H1 (cell line): ENCODE measurements at regions of chr1 and their contacts with region 1.

Region 1: GRCh38 chr1:50271968-50272578 is 151.2 kb downstream of the DMRTA2 start:
- DNase-seq: peak in 1 of 2 experiments; percentile 70
- H3K4me3 ChIP-seq: no peak overlapping the region
- H3K27ac ChIP-seq: no peak overlapping the region
- H3K4me1 ChIP-seq: peaks cover 2 to 12% (median 8%) of the 10 kb centered on the region in 4 experiments
- H3K27me3 ChIP-seq: no peaks in the 10 kb centered on the region
- CTCF ChIP-seq: peak; percentile 75 to 92 (median 84)
- EP300 ChIP-seq: no peak
- POLR2A ChIP-seq: no peak
- RAD21 ChIP-seq: peak; percentile 76 to 79

Region 2: GRCh38 chr1:50123071-50123470 is 149.0 kb before region 1 on chr1:
- CTCF ChIA-PET with region 1: no interaction called
- POLR2A ChIA-PET with region 1: no interaction called
- DNase-seq: no peak
- H3K4me3 ChIP-seq: no peak overlapping the region
- H3K27ac ChIP-seq: no peak overlapping the region
- H3K4me1 ChIP-seq: no peaks in the 10 kb centered on the region
- H3K27me3 ChIP-seq: no peaks in the 10 kb centered on the region
- CTCF ChIP-seq: no peak
- EP300 ChIP-seq: no peak
- POLR2A ChIP-seq: no peak
- RAD21 ChIP-seq: no peak

Region 3: GRCh38 chr1:50246869-50247268 is 25.2 kb before region 1 on chr1:
- CTCF ChIA-PET with region 1: interaction called, 11 read pairs
- POLR2A ChIA-PET with region 1: no interaction called
- DNase-seq: no peak
- H3K4me3 ChIP-seq: no peak overlapping the region
- H3K27ac ChIP-seq: no peak overlapping the region
- H3K4me1 ChIP-seq: peaks cover 0 to under 1% (median under 1%) of the 10 kb centered on the region in 4 experiments; a peak in 2 of 7 replicates
- H3K27me3 ChIP-seq: no peaks in the 10 kb centered on the region
- CTCF ChIP-seq: no peak
- EP300 ChIP-seq: no peak
- POLR2A ChIP-seq: no peak
- RAD21 ChIP-seq: no peak

Region 4: GRCh38 chr1:50257940-50258685 is 14.0 kb before region 1 on chr1:
- CTCF ChIA-PET with region 1: interaction called, 20 read pairs
- POLR2A ChIA-PET with region 1: interaction called, 3 read pairs
- DNase-seq: no peak
- H3K4me3 ChIP-seq: no peak overlapping the region
- H3K27ac ChIP-seq: no peak overlapping the region
- H3K4me1 ChIP-seq: no peaks in the 10 kb centered on the region
- H3K27me3 ChIP-seq: no peaks in the 10 kb centered on the region
- CTCF ChIP-seq: no peak
- EP300 ChIP-seq: no peak
- POLR2A ChIP-seq: no peak
- RAD21 ChIP-seq: no peak

Region 5: DNA sequence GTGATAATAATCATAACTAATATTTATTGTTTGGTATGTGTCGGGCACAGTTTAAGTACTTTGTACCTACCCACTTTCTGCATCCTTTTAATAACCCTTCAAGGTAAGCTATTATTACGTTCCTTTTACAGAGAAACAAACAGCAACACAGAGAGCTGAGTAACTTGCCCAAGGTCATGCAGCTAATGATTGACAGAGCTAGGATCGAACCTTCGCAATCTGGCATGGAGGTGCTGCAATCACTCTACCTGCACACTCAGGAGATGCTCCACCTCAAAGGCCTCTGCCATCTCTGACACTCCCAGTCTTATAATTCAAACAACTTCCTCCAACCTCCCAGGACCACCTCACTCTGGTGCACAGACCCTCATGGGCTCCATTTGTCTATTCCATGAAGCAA is 13.9 kb after region 1 on chr1:
- CTCF ChIA-PET with region 1: interaction called, 31 read pairs
- POLR2A ChIA-PET with region 1: no interaction called
- DNase-seq: no peak
- H3K4me3 ChIP-seq: no peak overlapping the region
- H3K27ac ChIP-seq: no peak overlapping the region
- H3K4me1 ChIP-seq: no peaks in the 10 kb centered on the region
- H3K27me3 ChIP-seq: no peaks in the 10 kb centered on the region; a peak in 1 of 7 replicates
- CTCF ChIP-seq: no peak
- EP300 ChIP-seq: no peak
- POLR2A ChIP-seq: no peak
- RAD21 ChIP-seq: no peak